ENCODE measurements at regions of chr7 and their contacts with region 1.

Region 1: GRCh38 chr7:25894902-25895791 is 256.9 kb upstream of the NFE2L3 start:
- DNase-seq: peak; percentile 84
- H3K4me3 ChIP-seq: peak overlapping the region; percentile 20
- H3K27ac ChIP-seq: no peak overlapping the region
- H3K4me1 ChIP-seq: peaks cover 22% of the 10 kb centered on the region
- H3K27me3 ChIP-seq: no peaks in the 10 kb centered on the region
- CTCF ChIP-seq: peak; percentile 88

Region 2: DNA sequence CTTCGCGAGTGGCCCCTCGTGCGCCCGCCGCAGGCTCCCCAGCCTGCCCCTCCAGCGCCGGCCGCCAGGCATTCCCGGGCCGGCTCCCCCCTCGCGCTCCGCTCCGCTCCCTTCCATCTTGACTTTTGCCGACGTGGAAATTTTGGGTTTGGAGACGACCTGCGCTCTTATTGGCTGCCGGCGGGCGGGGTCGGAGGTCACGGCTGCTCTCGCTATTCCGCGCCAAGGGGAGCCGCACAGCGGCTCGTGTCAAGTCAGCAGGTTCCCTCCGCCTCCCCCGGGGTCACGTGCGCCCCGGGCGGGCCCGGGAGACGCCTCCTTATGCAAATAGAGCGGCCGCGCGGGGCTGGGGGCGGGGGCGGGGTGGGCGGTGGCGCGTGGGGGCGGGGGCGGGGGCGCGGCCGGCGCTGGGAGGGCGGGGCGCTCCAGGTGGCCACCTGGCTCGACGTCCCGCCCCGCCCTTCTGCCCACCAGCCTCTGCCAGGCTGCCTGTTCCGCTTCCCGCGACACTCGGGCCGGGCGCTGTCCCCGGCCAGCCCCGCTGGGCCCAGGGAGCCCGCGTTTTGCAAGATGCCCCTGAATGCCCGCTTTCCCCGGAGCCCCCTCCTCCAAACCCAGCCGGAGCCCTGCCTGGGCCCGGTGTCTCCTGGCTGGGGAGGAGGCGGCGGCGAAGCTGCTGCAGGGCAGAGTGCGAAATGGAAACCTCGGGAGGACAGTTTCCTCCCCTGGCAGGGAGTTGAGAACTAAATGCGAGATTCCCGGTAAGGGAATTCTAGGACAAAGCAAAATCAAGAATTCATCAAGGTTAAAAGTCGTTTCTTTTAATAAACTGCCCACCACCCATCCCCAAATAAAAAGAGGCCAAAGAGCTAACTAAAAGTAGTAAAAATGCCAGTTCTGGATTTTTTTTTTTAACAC is 56.1 kb after region 1 on chr7:
- CTCF ChIA-PET with region 1: no interaction called
- POLR2A ChIA-PET with region 1: interaction called, 6 read pairs
- intact Hi-C with region 1: loop called (anchors 2 kb)
- DNase-seq: peak; percentile 96
- H3K4me3 ChIP-seq: peak overlapping the region; percentile 77
- H3K27ac ChIP-seq: peak overlapping the region; percentile 58
- H3K4me1 ChIP-seq: peaks cover 11% of the 10 kb centered on the region
- H3K27me3 ChIP-seq: no peaks in the 10 kb centered on the region
- CTCF ChIP-seq: no peak

Region 3: GRCh38 chr7:26117142-26117807 is 222.1 kb after region 1 on chr7:
- CTCF ChIA-PET with region 1: no interaction called
- POLR2A ChIA-PET with region 1: no interaction called
- intact Hi-C with region 1: no loop called
- DNase-seq: peak; percentile 25
- H3K4me3 ChIP-seq: no peak overlapping the region
- H3K27ac ChIP-seq: no peak overlapping the region
- H3K4me1 ChIP-seq: no peaks in the 10 kb centered on the region
- H3K27me3 ChIP-seq: no peaks in the 10 kb centered on the region
- CTCF ChIP-seq: no peak; the same call in 1 of the 2 replicates

Region 4: DNA sequence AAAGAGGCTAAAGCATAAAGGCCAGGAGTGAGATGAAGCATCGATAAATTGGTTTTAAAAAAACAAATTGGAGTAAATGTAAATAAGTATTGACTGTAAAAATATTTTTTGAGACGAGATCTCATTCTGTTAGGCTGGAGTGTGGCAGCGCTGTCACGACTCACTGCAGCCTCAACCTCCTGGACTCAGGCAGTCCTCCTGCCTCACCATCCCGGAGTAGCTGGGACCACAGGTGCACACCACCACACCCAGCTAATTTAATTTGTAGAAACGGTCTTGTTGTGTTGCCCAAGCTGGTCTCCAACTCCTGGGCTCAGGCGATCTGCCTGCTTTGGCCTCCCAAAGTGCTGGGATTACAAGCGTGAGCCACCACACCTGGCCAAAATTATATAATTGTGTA is 287.6 kb after region 1 on chr7:
- CTCF ChIA-PET with region 1: no interaction called
- POLR2A ChIA-PET with region 1: no interaction called
- intact Hi-C with region 1: loop called (anchors 5 kb)
- DNase-seq: no peak
- H3K4me3 ChIP-seq: no peak overlapping the region
- H3K27ac ChIP-seq: no peak overlapping the region
- H3K4me1 ChIP-seq: no peaks in the 10 kb centered on the region
- H3K27me3 ChIP-seq: no peaks in the 10 kb centered on the region
- CTCF ChIP-seq: no peak

Region 5: GRCh38 chr7:26284995-26285632 is 390.0 kb after region 1 on chr7:
- CTCF ChIA-PET with region 1: no interaction called
- POLR2A ChIA-PET with region 1: no interaction called
- intact Hi-C with region 1: loop called (anchors 10 kb)
- DNase-seq: peak; percentile 62
- H3K4me3 ChIP-seq: no peak overlapping the region
- H3K27ac ChIP-seq: no peak overlapping the region
- H3K4me1 ChIP-seq: no peaks in the 10 kb centered on the region
- H3K27me3 ChIP-seq: no peaks in the 10 kb centered on the region
- CTCF ChIP-seq: peak; percentile 54

Region 6: DNA sequence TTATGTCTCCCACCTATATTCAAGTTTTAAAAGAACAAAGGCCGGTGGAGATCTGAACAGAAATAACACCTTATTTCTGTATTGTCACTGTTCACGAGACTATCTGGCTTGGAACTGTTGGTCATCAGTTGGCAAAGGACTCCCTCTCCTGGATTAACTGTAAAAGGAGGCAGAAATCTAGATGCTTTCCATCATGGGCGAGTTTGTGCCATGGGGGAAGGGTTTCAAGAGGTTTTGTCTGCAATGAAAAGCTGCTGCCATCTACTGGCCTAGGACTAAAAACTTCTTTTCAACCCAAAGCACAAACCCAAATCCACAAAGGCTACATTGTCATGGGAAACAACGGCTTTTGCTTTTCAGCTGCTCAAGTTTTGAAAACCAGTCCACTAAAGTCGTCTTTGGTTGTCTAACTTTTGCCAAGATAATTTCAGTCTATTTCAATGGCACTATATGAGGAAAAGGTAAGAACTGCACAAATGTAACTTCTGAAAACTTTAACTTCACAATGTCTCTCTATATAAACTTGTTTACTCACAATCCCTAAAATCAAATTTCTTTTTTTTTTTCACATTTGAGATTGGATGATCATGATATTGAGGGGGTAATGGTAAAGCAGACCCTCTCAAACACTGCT is 772.5 kb after region 1 on chr7:
- CTCF ChIA-PET with region 1: no interaction called
- POLR2A ChIA-PET with region 1: no interaction called
- intact Hi-C with region 1: loop called (anchors 5 kb)
- DNase-seq: peak; percentile 95
- H3K4me3 ChIP-seq: no peak overlapping the region
- H3K27ac ChIP-seq: no peak overlapping the region
- H3K4me1 ChIP-seq: no peaks in the 10 kb centered on the region
- H3K27me3 ChIP-seq: peaks cover 80% of the 10 kb centered on the region
- CTCF ChIP-seq: peak; percentile 93